ENCODE measurements at regions of chr17 and their contacts with region 1.

Region 1: DNA sequence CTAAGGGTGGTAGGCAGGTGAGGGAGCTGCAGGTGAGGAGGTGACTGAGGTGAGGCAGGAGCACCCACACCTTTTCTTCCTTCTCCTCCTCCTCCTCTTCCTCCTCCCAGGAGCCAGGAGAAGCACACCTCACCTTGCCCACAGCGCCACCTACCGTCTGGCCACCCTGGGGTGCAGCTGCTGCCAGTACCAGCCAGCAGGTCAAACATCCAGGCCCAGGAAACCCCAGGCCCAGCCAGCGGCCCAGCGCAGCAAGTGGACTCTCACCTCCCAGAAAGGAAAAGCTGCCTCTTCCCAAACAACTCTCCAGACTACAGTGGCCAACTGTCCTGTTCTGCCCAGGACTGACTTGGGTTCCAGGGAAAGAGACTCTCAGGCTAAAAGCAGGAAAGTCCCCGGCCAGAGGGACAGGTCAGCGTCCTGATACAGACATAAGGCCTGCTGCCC is 22.7 kb downstream of the PEMT start:
- DNase-seq: peak; percentile 89

Region 2: DNA sequence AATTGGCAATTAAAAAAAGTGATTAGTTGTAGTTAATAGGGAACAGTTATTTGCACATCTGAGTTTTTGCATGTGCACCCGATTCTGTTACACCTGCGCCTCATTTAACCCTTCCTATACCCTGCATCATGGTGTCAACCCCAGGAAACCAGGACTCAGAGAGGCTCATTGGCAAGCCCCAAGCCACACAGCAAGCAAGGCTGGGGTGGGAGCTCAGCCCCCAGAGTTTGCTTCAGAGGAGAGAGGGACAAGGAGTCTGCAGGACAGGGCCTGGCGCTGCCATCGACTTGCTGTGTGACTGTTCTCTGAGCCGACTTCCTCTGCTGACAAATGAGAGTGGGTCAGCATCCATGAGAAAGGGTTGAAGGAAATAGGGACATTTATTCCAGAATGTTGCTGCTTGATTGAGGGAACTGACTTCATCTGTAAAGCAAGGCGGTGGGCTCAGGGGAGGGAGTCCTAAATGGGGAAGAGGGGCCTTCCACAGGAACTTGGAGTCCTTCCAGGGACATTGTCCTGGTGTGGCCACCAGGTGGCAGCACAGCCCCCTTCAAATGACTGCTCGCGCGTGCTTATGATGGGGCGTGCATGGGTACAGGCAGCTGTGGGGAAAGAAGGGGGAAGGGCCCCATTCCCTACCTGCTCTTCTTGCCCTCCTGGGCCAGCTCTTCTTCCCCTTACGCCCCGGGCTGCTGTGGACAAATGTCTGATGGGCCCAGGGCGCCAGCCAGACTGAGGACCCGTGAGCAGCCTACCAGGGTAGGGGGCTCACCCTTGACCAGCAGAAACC is 214.0 kb before region 1 on chr17:
- intact Hi-C with region 1: loop called (anchors 1 kb)
- DNase-seq: peak; percentile 85

Region 3: GRCh38 chr17:17463821-17464220 is 105.0 kb before region 1 on chr17:
- intact Hi-C with region 1: no loop called
- DNase-seq: no peak

Region 4: GRCh38 chr17:17476865-17477467 is 91.8 kb before region 1 on chr17 and contains the start of gene MED9:
- intact Hi-C with region 1: loop called (anchors 5 kb)
- DNase-seq: peak; percentile 95
- total RNA-seq, gene MED9: 30.5 TPM

Region 5: GRCh38 chr17:17526369-17526768 is 42.4 kb before region 1 on chr17:
- intact Hi-C with region 1: loop called (anchors 2 kb)
- DNase-seq: no peak

Region 6: DNA sequence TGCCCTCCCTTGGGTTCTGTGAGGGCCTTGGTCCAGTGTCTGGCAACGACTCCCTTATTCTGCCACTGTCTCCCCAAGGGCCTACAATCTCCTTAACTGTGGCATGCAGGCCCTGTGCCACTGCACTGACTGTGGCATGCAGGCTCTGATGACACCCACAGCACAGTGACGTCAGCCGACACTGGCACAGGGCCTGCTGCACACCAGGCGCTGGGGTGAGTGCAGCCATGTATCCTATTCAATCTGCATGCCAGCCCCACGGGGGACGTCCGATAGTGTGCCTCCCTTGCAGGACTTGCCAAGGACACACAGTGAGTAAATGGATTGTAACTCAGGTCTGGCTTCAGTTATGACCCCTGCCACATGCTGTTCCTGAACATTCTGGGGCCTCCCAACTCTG is 32.8 kb before region 1 on chr17:
- intact Hi-C with region 1: loop called (anchors 1 kb)
- DNase-seq: peak; percentile 93

Region 7: GRCh38 chr17:17551361-17551760 is 17.4 kb before region 1 on chr17:
- intact Hi-C with region 1: loop called (anchors 1 kb)
- DNase-seq: peak; percentile 87